Activated CD8-positive, alpha-beta T cell treated with anti-CD3 and anti-CD28 coated beads for 36 hours (primary cell): ENCODE measurements at regions of chr1 and their contacts with region 1.

Region 1: GRCh38 chr1:22025368-22026155 is 24.1 kb downstream of the CELA3A start:
- DNase-seq: peak; percentile 96
- ATAC-seq: peak; percentile 69
- H3K4me3 Mint-ChIP-seq: peak overlapping the region; percentile 86
- H3K27ac Mint-ChIP-seq: peak overlapping the region; percentile 99
- H3K4me1 Mint-ChIP-seq: peaks cover 47% of the 10 kb centered on the region
- H3K27me3 Mint-ChIP-seq: no peaks in the 10 kb centered on the region
- CTCF ChIP-seq: no peak

Region 2: GRCh38 chr1:21782868-21783678 is 242.5 kb before region 1 on chr1 and contains the start of gene USP48:
- CTCF ChIA-PET with region 1: interaction called, 3 read pairs
- POLR2A ChIA-PET with region 1: interaction called, 23 read pairs
- intact Hi-C with region 1: no loop called
- DNase-seq: peak; percentile 96
- ATAC-seq: peak; percentile 84
- H3K4me3 Mint-ChIP-seq: peak within 1 kb of the TSS; percentile 90
- H3K27ac Mint-ChIP-seq: peak within 1 kb of the TSS; percentile 100
- H3K4me1 Mint-ChIP-seq: peaks cover 24% of the 10 kb centered on the region
- H3K27me3 Mint-ChIP-seq: no peaks in the 10 kb centered on the region
- CTCF ChIP-seq: no peak
- total RNA-seq, gene USP48: 72.1 to 72.4 TPM

Region 3: DNA sequence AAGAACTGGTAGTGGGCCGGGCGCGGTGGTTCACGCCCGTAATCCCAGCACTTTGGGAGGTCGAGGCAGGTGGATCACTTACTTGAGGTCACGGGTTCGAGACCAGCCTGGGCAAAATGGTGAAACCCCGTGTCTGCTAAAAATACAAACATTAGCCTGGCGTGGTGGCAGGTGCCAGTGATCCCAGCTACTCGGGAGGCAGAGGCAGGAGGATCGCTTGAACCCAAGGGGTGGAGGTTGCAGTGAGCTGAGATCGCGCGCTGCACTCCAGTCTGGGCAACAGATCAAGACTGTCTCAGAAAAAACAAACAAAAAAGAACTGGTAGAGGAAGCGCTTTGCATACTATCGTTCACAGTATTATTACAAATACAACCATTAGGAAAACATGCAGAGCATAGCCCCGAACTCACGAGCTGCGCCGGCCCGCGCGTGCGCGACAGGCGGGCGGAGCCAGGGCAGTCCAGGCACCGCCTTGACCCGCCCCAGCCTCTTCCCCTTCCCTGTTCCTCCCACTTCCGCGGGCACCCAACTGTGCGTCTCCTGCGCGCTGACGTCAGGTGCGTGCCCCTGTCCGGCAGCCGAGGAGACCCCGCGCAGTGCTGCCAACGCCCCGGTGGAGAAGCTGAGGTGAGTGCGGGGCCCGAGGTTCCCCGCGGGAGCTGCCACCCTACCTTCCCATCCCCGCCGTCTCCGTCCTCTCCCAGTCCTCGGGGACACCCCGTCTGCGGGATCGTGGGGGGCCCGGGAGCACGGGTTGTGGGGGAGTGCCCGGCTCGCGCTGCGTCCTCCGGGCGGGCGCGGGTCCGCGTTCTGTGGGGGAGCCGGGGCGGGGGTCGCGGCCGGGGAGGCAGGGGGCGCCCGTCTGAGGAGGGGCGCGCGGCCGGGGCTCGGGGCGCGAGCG is 26.8 kb after region 1 on chr1 and contains the start of gene CDC42:
- CTCF ChIA-PET with region 1: interaction called, 40 read pairs
- POLR2A ChIA-PET with region 1: interaction called, 218 read pairs
- intact Hi-C with region 1: loop called (anchors 2 kb)
- DNase-seq: peak; percentile 98
- ATAC-seq: peak; percentile 92
- H3K4me3 Mint-ChIP-seq: peak within 1 kb of the TSS; percentile 98
- H3K27ac Mint-ChIP-seq: peak within 1 kb of the TSS; percentile 98
- H3K4me1 Mint-ChIP-seq: peaks cover 62% of the 10 kb centered on the region
- H3K27me3 Mint-ChIP-seq: no peaks in the 10 kb centered on the region
- CTCF ChIP-seq: no peak
- total RNA-seq, gene CDC42: 292 to 310 TPM

Region 4: GRCh38 chr1:22077728-22078127 is 52.2 kb after region 1 on chr1:
- CTCF ChIA-PET with region 1: interaction called, 10 read pairs
- POLR2A ChIA-PET with region 1: interaction called, 4 read pairs
- intact Hi-C with region 1: no loop called
- DNase-seq: peak; percentile 21
- ATAC-seq: peak; percentile 69
- H3K4me3 Mint-ChIP-seq: no peak overlapping the region
- H3K27ac Mint-ChIP-seq: peak overlapping the region; percentile 31
- H3K4me1 Mint-ChIP-seq: peaks cover 84% of the 10 kb centered on the region
- H3K27me3 Mint-ChIP-seq: no peaks in the 10 kb centered on the region
- CTCF ChIP-seq: no peak

Region 5: GRCh38 chr1:22105611-22106207 is 80.1 kb after region 1 on chr1:
- CTCF ChIA-PET with region 1: interaction called, 16 read pairs
- POLR2A ChIA-PET with region 1: interaction called, 16 read pairs
- intact Hi-C with region 1: no loop called
- DNase-seq: peak; percentile 35
- ATAC-seq: peak; percentile 62
- H3K4me3 Mint-ChIP-seq: no peak overlapping the region
- H3K27ac Mint-ChIP-seq: peak overlapping the region; percentile 93
- H3K4me1 Mint-ChIP-seq: peaks cover 65% of the 10 kb centered on the region
- H3K27me3 Mint-ChIP-seq: no peaks in the 10 kb centered on the region
- CTCF ChIP-seq: peak; percentile 96